Heart right ventricle (tissue), 16 donors: ENCODE measurements at regions of chr16 and their contacts with region 1.

Region 1: GRCh38 chr16:11639925-11640899 is 28.0 kb upstream of the SNN start:
- DNase-seq: peak; percentile 79 to 89
- ATAC-seq: peak; percentile 91 to 97 (median 92)
- H3K4me3 ChIP-seq: no peak overlapping the region
- H3K27ac ChIP-seq: peak overlapping the region; percentile 82 to 92 (median 87)
- H3K4me1 ChIP-seq: peaks cover 5 to 25% (median 16%) of the 10 kb centered on the region in 9 donors
- H3K27me3 ChIP-seq: no peaks in the 10 kb centered on the region
- CTCF ChIP-seq: no peak

Region 2: DNA sequence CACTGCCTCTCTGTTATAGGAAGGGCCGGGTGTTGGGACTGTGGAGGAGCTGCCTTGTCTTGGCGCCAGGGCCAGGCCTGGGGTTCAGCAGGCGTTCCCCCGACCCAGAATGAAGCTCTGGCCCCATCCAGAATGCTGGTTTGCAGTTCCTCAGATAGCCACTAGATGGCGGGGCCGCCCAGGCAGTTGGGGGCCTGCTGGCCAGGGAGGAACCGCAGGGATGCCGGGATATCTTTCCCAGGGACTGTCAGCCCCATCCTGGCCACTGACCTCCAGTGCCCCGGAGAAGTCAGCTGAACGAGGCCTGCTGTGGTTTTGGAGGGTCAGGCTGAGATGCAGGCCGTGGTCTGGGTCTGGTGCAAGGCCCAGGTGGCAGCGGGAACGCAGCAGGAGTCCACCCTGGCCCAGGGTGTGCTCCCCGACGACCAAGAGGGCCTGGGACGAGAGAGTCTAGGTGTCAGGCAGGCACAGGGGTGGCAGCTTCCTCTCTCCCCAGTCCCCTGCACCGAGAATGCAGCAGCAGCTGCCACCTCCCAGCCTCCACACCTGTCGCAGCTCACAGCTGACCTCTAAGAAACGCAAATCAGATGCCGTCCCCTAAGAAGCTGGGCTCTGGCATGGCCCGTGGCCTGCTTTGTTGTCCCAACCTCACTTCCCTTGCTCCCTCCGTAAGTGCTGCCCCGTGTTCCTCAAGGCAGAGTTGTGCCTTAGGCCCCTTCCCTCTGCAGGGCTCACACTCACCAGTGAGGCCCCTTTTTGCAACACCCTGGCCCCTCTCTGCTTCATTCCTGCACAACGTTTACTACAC is 243.8 kb before region 1 on chr16:
- intact Hi-C with region 1: loop called in 1 of 10 experiments (anchors 5 kb)
- DNase-seq: peak; percentile 70 to 71
- ATAC-seq: peak; percentile 77 to 87 (median 82)
- H3K4me3 ChIP-seq: no peak overlapping the region
- H3K27ac ChIP-seq: peak overlapping the region in 5 of 10 donors; percentile 13 to 55 (median 45)
- H3K4me1 ChIP-seq: peaks cover 0 to 7% (median 5%) of the 10 kb centered on the region in 9 donors
- H3K27me3 ChIP-seq: no peaks in the 10 kb centered on the region
- CTCF ChIP-seq: peak; percentile 95 to 100 (median 99)

Region 3: GRCh38 chr16:11407047-11407982 is 232.9 kb before region 1 on chr16:
- intact Hi-C with region 1: loop called in 8 of 10 experiments (anchors 1 to 5 kb)
- DNase-seq: peak in 1 of 2 donors; percentile 58
- ATAC-seq: peak in 6 of 8 donors; percentile 34 to 76 (median 51)
- H3K4me3 ChIP-seq: no peak overlapping the region
- H3K27ac ChIP-seq: no peak overlapping the region
- H3K4me1 ChIP-seq: peaks cover 0 to 4% (median 0%) of the 10 kb centered on the region in 9 donors
- H3K27me3 ChIP-seq: no peaks in the 10 kb centered on the region
- CTCF ChIP-seq: peak; percentile 38 to 81 (median 66)

Region 4: GRCh38 chr16:11526655-11527350 is 113.4 kb before region 1 on chr16:
- intact Hi-C with region 1: loop called (anchors 2 to 10 kb)
- DNase-seq: no peak
- ATAC-seq: peak in 2 of 8 donors; percentile 25 to 35
- H3K4me3 ChIP-seq: no peak overlapping the region
- H3K27ac ChIP-seq: no peak overlapping the region
- H3K4me1 ChIP-seq: peaks cover 0 to 6% (median 0%) of the 10 kb centered on the region in 9 donors
- H3K27me3 ChIP-seq: peaks cover 0 to 26% (median 7%) of the 10 kb centered on the region in 7 donors
- CTCF ChIP-seq: no peak

Region 5: GRCh38 chr16:11535471-11535870 is 104.7 kb before region 1 on chr16:
- intact Hi-C with region 1: loop called (anchors 2 to 10 kb)
- DNase-seq: no peak
- ATAC-seq: no peak
- H3K4me3 ChIP-seq: no peak overlapping the region
- H3K27ac ChIP-seq: no peak overlapping the region
- H3K4me1 ChIP-seq: peaks cover 0 to 13% (median 0%) of the 10 kb centered on the region in 9 donors
- H3K27me3 ChIP-seq: no peaks in the 10 kb centered on the region
- CTCF ChIP-seq: no peak

Region 6: DNA sequence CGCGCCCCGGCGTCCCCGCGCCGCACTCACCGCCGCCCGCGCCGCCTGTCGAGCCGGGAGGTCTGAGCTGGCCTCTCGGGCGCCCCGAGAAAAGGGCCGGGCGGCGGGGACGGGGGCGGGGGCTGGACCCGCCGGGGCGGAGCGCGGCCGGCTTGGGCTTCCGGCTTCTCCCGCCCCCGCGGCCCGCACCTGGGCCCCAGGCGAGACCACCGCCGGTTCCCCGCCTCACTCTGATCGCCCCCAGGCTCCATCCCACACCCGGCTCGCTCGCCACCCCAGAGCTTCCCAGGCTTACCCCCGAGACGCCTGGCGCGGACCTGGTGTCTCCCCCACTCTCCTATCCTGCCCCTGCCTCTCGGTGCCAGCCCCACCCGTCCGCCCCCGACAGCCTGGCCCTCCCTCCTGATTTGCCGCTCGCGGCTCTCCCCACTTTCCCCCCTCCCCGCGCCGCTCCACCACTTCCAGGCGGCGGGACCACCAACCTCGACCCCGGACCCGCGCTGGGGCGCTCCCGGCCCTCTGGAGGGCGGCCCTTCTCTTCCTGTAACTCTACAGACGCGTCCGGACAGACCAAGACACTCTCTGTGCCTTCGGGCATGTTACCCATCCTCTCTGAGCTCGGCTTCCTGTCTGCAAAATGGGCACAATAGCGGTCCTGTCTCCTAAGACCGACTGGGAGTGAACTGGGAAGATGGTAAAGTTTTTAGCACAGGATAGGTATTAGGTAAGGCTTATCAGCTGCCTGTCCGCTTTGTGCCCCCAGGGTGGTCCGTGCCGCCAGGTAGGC is 53.2 kb before region 1 on chr16 and contains the start of gene LITAF:
- intact Hi-C with region 1: loop called in 3 of 10 experiments (anchors 5 kb)
- DNase-seq: peak; percentile 66 to 78
- ATAC-seq: peak; percentile 73 to 89 (median 84)
- H3K4me3 ChIP-seq: peak within 1 kb of the TSS; percentile 62 to 91 (median 78)
- H3K27ac ChIP-seq: peak within 1 kb of the TSS; percentile 64 to 99 (median 94)
- H3K4me1 ChIP-seq: peaks cover 5 to 50% (median 13%) of the 10 kb centered on the region in 9 donors
- H3K27me3 ChIP-seq: peaks cover 0 to 5% (median 0%) of the 10 kb centered on the region in 7 donors
- CTCF ChIP-seq: peak in 1 of 9 donors; percentile 3
- total RNA-seq, gene LITAF: 29.5 to 96.9 (median 41.6) TPM

Region 7: GRCh38 chr16:11667824-11668622 is 27.8 kb after region 1 on chr16 and contains the start of gene SNN:
- intact Hi-C with region 1: loop called in 1 of 10 experiments (anchors 2 kb)
- DNase-seq: peak; percentile 88 to 93
- ATAC-seq: peak; percentile 84 to 95 (median 88)
- H3K4me3 ChIP-seq: peak within 1 kb of the TSS; percentile 67 to 98 (median 92)
- H3K27ac ChIP-seq: peak within 1 kb of the TSS; percentile 73 to 89 (median 86)
- H3K4me1 ChIP-seq: peaks cover 32 to 69% (median 58%) of the 10 kb centered on the region in 9 donors
- H3K27me3 ChIP-seq: no peaks in the 10 kb centered on the region
- CTCF ChIP-seq: no peak
- total RNA-seq, gene SNN: 25.5 to 61.4 (median 37.6) TPM